WTC11 (cell line): ENCODE measurements at regions of chr6 and their contacts with region 1.

Region 1: GRCh38 chr6:25266456-25267100 is 12.6 kb upstream of the CARMIL1 start:
- DNase-seq: no peak
- ATAC-seq: no peak
- H3K4me3 Mint-ChIP-seq: no peak overlapping the region
- H3K27ac Mint-ChIP-seq: no peak overlapping the region
- H3K4me1 Mint-ChIP-seq: peaks cover 11% of the 10 kb centered on the region
- H3K27me3 Mint-ChIP-seq: no peaks in the 10 kb centered on the region; the same call in 1 of the 2 replicates
- CTCF ChIP-seq: no peak

Region 2: DNA sequence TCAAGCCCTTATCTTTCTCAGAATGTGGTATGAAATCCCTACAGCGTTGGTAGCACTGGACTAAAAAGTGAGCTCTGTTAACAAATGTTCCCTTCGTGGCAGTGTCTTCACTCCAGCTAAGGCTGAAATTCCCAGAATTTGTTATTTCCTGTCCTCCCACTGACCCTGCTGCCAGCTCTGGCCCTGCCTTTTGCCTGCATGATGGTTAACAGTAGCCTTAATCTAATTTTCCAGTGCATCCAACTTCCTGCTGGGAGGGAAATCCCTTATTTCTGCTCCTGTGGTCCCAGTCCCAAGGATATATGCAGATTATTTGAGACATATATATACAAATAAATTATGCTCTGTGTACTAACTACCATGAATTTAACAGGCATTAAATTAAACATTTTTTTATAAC is 144.6 kb before region 1 on chr6:
- CTCF ChIA-PET with region 1: no interaction called
- POLR2A ChIA-PET with region 1: no interaction called
- DNase-seq: no peak
- ATAC-seq: no peak
- H3K4me3 Mint-ChIP-seq: no peak overlapping the region
- H3K27ac Mint-ChIP-seq: no peak overlapping the region
- H3K4me1 Mint-ChIP-seq: peaks cover 7% of the 10 kb centered on the region
- H3K27me3 Mint-ChIP-seq: no peaks in the 10 kb centered on the region
- CTCF ChIP-seq: no peak

Region 3: GRCh38 chr6:25342802-25343201 is 76.2 kb after region 1 on chr6:
- CTCF ChIA-PET with region 1: interaction called, 12 read pairs
- POLR2A ChIA-PET with region 1: no interaction called
- DNase-seq: no peak
- ATAC-seq: no peak
- H3K4me3 Mint-ChIP-seq: no peak overlapping the region
- H3K27ac Mint-ChIP-seq: peak overlapping the region; percentile 46; the same call in 1 of the 2 replicates
- H3K4me1 Mint-ChIP-seq: peaks cover 36% of the 10 kb centered on the region
- H3K27me3 Mint-ChIP-seq: no peaks in the 10 kb centered on the region
- CTCF ChIP-seq: no peak

Region 4: GRCh38 chr6:25490018-25490801 is 223.6 kb after region 1 on chr6:
- CTCF ChIA-PET with region 1: interaction called, 36 read pairs
- POLR2A ChIA-PET with region 1: no interaction called
- DNase-seq: peak; percentile 86
- ATAC-seq: peak; percentile 100
- H3K4me3 Mint-ChIP-seq: no peak overlapping the region
- H3K27ac Mint-ChIP-seq: peak overlapping the region; percentile 73
- H3K4me1 Mint-ChIP-seq: peaks cover 16% of the 10 kb centered on the region
- H3K27me3 Mint-ChIP-seq: no peaks in the 10 kb centered on the region
- CTCF ChIP-seq: peak; percentile 64

Region 5: DNA sequence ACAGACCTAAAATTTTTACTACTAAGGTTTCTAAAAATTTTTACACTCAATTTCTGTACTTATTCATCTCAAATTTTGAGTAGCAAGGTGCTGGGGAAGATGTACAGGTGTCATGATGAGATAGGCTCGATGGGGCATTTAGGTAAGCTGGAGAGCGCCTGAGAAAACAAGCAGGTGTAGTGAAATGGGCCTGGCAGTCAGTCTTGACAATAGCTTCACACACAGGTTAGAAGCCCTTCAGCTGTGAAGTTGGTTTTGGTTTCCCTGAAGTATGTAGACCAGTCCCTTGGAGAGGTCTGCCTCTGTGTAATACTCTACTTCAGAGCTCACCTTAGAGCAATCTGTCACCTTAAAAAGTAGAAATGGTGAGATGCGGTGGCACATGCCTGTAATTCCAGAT is 241.5 kb after region 1 on chr6:
- CTCF ChIA-PET with region 1: interaction called, 10 read pairs
- POLR2A ChIA-PET with region 1: no interaction called
- DNase-seq: no peak
- ATAC-seq: no peak
- H3K4me3 Mint-ChIP-seq: no peak overlapping the region
- H3K27ac Mint-ChIP-seq: no peak overlapping the region
- H3K4me1 Mint-ChIP-seq: peaks cover 14% of the 10 kb centered on the region
- H3K27me3 Mint-ChIP-seq: no peaks in the 10 kb centered on the region
- CTCF ChIP-seq: no peak

Region 6: DNA sequence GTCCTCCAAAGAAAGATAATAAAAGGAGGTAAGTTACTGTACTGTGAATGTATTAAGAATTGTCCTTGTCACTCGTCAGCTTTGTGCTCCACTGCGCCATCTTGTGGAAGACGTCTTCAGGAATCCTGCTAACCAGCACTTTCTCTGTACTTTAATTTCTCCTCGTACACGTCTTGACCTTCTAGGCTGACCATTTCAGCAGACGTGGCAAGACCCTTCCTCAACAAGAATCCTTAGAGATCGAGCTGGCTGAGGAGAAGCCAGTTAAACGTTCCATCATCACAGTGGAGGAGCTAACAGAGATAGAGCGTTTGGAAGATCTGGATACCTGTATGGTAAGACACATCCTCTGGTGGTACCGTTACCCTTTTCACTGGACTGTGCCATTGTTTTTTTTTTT is 289.9 kb after region 1 on chr6:
- CTCF ChIA-PET with region 1: interaction called, 30 read pairs
- POLR2A ChIA-PET with region 1: no interaction called
- DNase-seq: peak; percentile 87
- ATAC-seq: peak; percentile 82
- H3K4me3 Mint-ChIP-seq: no peak overlapping the region
- H3K27ac Mint-ChIP-seq: 0 out of 2 replicates have a peak overlapping the region, but pooled peaks have one; percentile 78
- H3K4me1 Mint-ChIP-seq: peaks cover 7% of the 10 kb centered on the region
- H3K27me3 Mint-ChIP-seq: no peaks in the 10 kb centered on the region
- CTCF ChIP-seq: peak; percentile 63